CD8-positive, alpha-beta T cell (primary cell): ENCODE measurements at regions of chr7 and their contacts with region 1.

Region 1: DNA sequence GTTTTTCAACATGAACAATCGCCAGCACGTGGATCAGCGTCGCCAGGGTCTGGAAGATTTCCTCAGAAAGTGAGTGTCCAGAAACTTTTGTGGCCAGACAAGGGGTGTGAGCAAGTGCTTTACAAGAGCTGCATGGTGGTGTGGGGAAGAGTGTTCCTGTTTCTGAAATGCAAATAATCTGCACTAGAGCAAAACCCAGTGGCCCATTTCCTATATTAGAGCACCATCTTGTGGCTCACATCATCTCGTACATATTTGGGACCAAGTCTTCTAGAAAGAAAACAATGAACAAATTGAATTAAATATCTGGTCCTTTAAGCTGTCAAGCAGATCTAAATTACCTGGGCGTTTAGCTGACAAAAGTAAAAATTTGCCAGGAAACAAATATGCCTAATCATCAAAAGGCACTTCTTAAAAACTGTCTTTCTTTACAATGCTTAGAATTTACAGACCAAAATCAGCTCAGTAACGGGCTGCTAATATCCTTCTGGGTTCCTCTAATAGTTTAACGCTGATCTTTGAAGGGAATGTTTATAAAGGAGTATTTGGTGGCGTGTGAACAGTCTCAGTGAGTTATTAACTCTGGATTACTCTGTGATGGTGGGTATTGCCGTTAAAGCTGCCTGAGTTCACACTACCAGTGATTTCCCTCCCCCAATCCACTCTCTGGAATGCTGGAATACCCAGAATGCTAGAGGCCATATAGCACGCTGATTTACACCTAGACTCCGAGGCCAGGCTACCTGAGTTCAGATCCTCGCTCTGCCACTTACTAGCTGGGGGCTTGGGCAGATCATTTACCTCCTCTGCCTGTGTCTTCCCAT is 73.6 kb downstream of the SNX10 start:
- DNase-seq: peak in 8 of 9 experiments; percentile 20 to 82 (median 53)
- ATAC-seq: peak; percentile 77
- H3K4me3 ChIP-seq: no peak overlapping the region
- H3K4me3 Mint-ChIP-seq: no peak overlapping the region
- H3K27ac ChIP-seq: no peak overlapping the region
- H3K27ac Mint-ChIP-seq: no peak overlapping the region
- H3K4me1 ChIP-seq: peaks cover 8% of the 10 kb centered on the region
- H3K4me1 Mint-ChIP-seq: peaks cover 11% of the 10 kb centered on the region
- H3K27me3 ChIP-seq: no peaks in the 10 kb centered on the region
- H3K27me3 Mint-ChIP-seq: no peaks in the 10 kb centered on the region
- CTCF ChIP-seq: peak; percentile 75

Region 2: DNA sequence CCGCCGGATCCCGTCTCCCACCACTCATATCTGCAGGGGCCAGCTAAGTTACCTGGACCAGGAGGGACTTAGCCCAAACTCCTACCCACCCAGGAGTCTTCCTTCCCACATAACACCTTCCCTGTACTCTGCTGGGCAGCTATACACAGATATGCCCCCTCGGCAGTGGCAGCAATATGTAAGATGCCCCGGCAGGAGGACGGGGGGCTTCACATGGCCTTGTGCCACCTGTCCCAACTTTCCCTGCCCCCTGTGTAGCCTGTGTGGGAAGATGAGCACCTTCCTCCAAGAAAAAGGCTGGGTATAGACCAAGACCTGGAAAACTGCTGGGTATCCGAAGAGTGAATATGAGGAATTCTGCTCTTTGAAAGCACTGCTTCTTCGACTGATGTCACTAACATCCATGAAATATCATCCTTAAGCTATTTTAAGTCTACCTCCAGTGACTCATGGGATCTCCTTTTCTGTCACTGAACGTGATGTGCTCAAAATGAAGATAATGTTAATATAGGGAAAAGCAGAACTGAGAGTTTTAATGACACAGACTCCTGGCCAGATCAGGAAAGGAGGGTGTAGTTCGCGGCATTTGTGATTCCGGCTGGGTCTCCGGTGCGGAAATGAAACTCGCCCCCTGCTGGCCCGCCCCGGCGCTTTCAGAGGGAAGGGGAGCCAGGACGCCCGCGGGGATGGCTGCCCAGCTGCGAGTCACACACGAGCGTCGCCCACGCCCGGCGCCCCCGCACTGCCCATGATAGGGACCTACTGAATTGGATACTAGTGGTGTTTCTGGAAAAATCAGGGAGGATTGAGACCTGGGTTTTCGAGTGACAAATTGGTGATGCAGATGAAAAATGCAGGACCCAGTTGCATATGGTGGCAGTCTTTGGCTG is 470.1 kb before region 1 on chr7:
- CTCF ChIA-PET with region 1: interaction called, 141 read pairs
- POLR2A ChIA-PET with region 1: interaction called, 7 read pairs
- intact Hi-C with region 1: loop called (anchors 1 kb)
- DNase-seq: peak; percentile 41 to 80 (median 63)
- ATAC-seq: peak; percentile 41
- H3K4me3 ChIP-seq: peak overlapping the region in 1 of 2 experiments; percentile 12
- H3K4me3 Mint-ChIP-seq: peak overlapping the region; percentile 35
- H3K27ac ChIP-seq: no peak overlapping the region
- H3K27ac Mint-ChIP-seq: no peak overlapping the region
- H3K4me1 ChIP-seq: peaks cover 14% of the 10 kb centered on the region
- H3K4me1 Mint-ChIP-seq: peaks cover 21% of the 10 kb centered on the region
- H3K27me3 ChIP-seq: no peaks in the 10 kb centered on the region
- H3K27me3 Mint-ChIP-seq: peaks cover under 1% of the 10 kb centered on the region
- CTCF ChIP-seq: peak; percentile 45

Region 3: DNA sequence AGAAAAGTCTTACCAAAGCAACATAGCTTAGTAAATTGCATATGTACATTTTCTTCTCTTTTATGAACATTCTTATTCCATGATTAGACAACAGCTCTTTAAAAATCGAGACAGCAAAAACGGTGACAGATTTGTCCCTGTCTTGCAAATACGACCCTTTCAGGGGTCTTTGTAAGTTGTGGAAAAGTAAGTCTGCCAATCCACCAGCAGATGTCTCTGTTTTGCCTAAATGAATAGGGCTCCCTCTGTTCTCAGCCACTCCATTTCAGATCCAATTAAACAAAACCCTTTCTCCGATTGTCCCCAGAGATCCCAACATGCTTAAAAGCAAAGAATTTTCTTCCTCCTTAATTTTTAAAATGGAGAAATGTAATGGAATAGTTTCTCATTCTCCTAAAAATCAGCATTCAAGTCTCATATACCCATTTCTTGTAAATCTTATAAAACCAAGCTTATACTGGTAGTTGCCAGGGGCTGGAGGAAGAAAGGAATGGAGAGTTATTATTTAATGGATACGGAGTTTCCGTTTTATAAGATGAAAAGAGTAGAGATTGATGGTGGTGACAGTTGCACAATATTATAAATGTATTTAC is 274.3 kb before region 1 on chr7:
- CTCF ChIA-PET with region 1: interaction called, 78 read pairs
- POLR2A ChIA-PET with region 1: no interaction called
- intact Hi-C with region 1: loop called (anchors 1 kb)
- DNase-seq: peak in 2 of 9 experiments; percentile 59 to 73
- ATAC-seq: peak; percentile 61
- H3K4me3 ChIP-seq: no peak overlapping the region
- H3K4me3 Mint-ChIP-seq: no peak overlapping the region
- H3K27ac ChIP-seq: no peak overlapping the region
- H3K27ac Mint-ChIP-seq: no peak overlapping the region
- H3K4me1 ChIP-seq: peaks cover 6% of the 10 kb centered on the region
- H3K4me1 Mint-ChIP-seq: peaks cover 16% of the 10 kb centered on the region
- H3K27me3 ChIP-seq: no peaks in the 10 kb centered on the region
- H3K27me3 Mint-ChIP-seq: no peaks in the 10 kb centered on the region
- CTCF ChIP-seq: peak; percentile 70

Region 4: DNA sequence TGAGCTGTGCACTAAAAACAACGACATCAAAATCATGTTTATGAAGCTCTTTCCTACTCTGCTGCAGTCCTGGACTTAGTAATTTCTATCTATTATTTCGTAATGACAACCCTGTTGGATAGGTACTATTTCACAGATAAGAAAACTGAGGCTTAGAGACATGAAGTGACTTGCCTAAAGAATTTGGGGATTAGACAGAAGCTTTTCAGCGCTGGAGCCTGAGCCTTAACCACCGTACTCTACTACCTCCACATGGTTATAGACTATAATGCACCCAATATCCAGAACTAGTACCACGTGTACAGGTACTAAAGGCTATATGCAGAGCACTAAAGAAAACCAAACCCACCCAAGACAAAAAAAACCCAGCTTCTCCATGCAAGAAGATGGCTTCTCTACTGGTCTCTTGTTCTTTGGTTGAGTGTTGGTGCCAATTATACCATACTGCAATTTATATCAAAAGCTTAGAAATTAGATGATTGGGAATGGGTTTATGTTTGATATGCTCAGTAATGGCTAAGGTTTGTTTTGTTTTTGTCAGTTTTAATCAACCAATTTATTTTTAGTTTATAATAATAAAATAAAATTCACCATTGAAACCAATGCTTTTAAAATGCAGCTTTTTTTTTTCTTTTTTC is 80.2 kb before region 1 on chr7:
- CTCF ChIA-PET with region 1: interaction called, 23 read pairs
- POLR2A ChIA-PET with region 1: no interaction called
- intact Hi-C with region 1: loop called in 1 of 2 experiments (anchors 2 kb)
- DNase-seq: peak in 2 of 9 experiments; percentile 35 to 53
- ATAC-seq: peak; percentile 95
- H3K4me3 ChIP-seq: no peak overlapping the region
- H3K4me3 Mint-ChIP-seq: no peak overlapping the region
- H3K27ac ChIP-seq: no peak overlapping the region
- H3K27ac Mint-ChIP-seq: no peak overlapping the region
- H3K4me1 ChIP-seq: no peaks in the 10 kb centered on the region
- H3K4me1 Mint-ChIP-seq: no peaks in the 10 kb centered on the region
- H3K27me3 ChIP-seq: no peaks in the 10 kb centered on the region
- H3K27me3 Mint-ChIP-seq: no peaks in the 10 kb centered on the region
- CTCF ChIP-seq: peak; percentile 38

Region 5: DNA sequence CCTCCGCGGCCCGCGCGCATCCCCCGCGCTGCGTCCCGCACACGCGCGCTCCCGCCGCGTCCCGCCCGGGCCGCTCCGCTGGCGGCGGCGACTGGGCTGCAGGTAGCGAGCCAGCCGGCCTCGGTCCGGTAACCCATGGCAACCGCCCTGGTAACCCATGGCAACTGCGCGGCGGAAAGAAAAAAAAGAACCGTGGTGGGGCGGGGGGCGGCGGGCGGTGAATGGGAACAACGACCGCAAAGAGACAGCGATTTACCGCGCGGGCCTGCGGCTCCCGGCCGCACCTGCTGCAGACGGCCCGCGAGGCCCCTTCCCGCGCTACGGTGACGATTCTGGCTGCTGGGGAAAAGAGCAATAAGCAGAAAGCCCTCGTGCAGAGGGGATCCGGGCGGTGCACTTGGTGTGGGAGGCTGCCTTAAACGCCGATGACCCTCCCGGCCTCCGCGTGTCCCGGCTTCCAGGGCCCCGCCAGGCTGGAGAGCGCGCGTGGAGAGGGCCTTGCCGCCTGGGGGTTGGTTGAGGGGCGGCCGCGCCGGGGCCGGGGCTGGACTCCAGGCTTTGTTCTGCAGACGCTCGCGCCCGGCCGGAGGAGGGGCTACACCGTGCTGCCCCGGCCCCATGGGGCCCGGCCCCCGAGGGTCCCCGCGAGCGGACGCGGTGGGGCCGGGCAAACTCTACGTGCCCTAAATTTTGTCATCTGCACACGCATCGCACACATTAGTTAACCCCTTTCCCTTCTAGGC is 11.1 kb after region 1 on chr7:
- CTCF ChIA-PET with region 1: interaction called, 26 read pairs
- POLR2A ChIA-PET with region 1: interaction called, 3 read pairs
- intact Hi-C with region 1: no loop called
- DNase-seq: peak in 5 of 9 experiments; percentile 9 to 56 (median 52)
- ATAC-seq: peak; percentile 41
- H3K4me3 ChIP-seq: peak overlapping the region; percentile 57 to 75
- H3K4me3 Mint-ChIP-seq: peak overlapping the region; percentile 84
- H3K27ac ChIP-seq: no peak overlapping the region
- H3K27ac Mint-ChIP-seq: no peak overlapping the region
- H3K4me1 ChIP-seq: peaks cover 8% of the 10 kb centered on the region
- H3K4me1 Mint-ChIP-seq: peaks cover 5% of the 10 kb centered on the region
- H3K27me3 ChIP-seq: peaks cover 7 to 11% of the 10 kb centered on the region in 2 experiments
- H3K27me3 Mint-ChIP-seq: peaks cover 29% of the 10 kb centered on the region
- CTCF ChIP-seq: no peak

Region 6: DNA sequence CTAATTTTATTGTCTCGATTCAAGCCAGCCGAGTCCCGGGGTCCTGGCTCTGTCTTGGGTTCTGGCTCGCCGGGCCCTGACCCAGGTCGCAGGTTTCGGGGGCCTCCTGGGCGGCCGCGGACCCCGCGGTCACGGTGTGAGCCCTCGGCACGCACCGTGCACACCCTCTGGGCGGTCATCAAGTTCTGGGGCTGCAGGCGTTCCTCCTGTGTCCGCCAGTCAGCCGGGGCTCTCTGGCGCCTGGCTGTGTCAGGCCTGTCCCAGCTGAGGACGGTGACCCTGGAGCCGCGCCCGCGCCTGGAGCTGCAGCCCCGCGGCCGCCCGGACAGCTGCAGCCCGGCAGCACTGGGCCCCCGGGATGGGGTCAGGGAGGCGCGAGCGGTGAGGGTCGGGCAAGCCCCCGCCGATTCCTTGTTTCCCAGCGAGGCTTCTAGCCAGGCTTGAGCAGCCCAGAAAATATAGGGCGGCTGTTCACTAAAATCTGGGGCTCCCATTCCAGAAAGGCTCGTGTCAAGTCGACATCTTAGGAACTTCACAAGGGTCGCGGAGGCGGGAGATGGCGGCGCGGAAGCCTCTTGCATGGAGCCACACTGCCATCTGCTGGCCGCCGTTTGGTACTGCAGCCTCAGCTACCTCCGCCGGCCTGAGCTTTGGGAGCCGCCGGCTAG is 795.4 kb after region 1 on chr7:
- CTCF ChIA-PET with region 1: interaction called, 21 read pairs
- POLR2A ChIA-PET with region 1: interaction called, 3 read pairs
- intact Hi-C with region 1: loop called (anchors 1 kb)
- DNase-seq: peak; percentile 70 to 93 (median 87)
- ATAC-seq: peak; percentile 87
- H3K4me3 ChIP-seq: peak overlapping the region; percentile 63 to 79
- H3K4me3 Mint-ChIP-seq: peak overlapping the region; percentile 80
- H3K27ac ChIP-seq: no peak overlapping the region
- H3K27ac Mint-ChIP-seq: no peak overlapping the region
- H3K4me1 ChIP-seq: peaks cover 31% of the 10 kb centered on the region
- H3K4me1 Mint-ChIP-seq: peaks cover 41% of the 10 kb centered on the region
- H3K27me3 ChIP-seq: peaks cover 52 to 70% of the 10 kb centered on the region in 2 experiments
- H3K27me3 Mint-ChIP-seq: peaks cover 77% of the 10 kb centered on the region
- CTCF ChIP-seq: peak; percentile 97